CD8-positive, alpha-beta T cell (primary cell): ENCODE measurements at regions of chrX and their contacts with region 1.

Region 1: GRCh38 chrX:56600141-56600540 is 36.7 kb downstream of the UBQLN2 start:
- DNase-seq: no peak
- ATAC-seq: no peak
- H3K4me3 ChIP-seq: no peak overlapping the region
- H3K4me3 Mint-ChIP-seq: no peak overlapping the region
- H3K27ac ChIP-seq: no peak overlapping the region
- H3K27ac Mint-ChIP-seq: no peak overlapping the region
- H3K4me1 ChIP-seq: no peaks in the 10 kb centered on the region
- H3K4me1 Mint-ChIP-seq: peaks cover 3% of the 10 kb centered on the region
- H3K27me3 ChIP-seq: no peaks in the 10 kb centered on the region
- H3K27me3 Mint-ChIP-seq: no peaks in the 10 kb centered on the region
- CTCF ChIP-seq: no peak

Region 2: GRCh38 chrX:56550667-56551066 is 49.5 kb before region 1 on chrX:
- CTCF ChIA-PET with region 1: no interaction called
- POLR2A ChIA-PET with region 1: no interaction called
- intact Hi-C with region 1: loop called in 1 of 2 experiments (anchors 10 kb)
- DNase-seq: no peak
- ATAC-seq: no peak
- H3K4me3 ChIP-seq: no peak overlapping the region
- H3K4me3 Mint-ChIP-seq: no peak overlapping the region
- H3K27ac ChIP-seq: no peak overlapping the region
- H3K27ac Mint-ChIP-seq: no peak overlapping the region
- H3K4me1 ChIP-seq: no peaks in the 10 kb centered on the region
- H3K4me1 Mint-ChIP-seq: no peaks in the 10 kb centered on the region
- H3K27me3 ChIP-seq: no peaks in the 10 kb centered on the region
- H3K27me3 Mint-ChIP-seq: no peaks in the 10 kb centered on the region
- CTCF ChIP-seq: no peak

Region 3: GRCh38 chrX:56729152-56729850 is 129.2 kb after region 1 on chrX and contains the start of gene NBDY:
- CTCF ChIA-PET with region 1: no interaction called
- POLR2A ChIA-PET with region 1: no interaction called
- intact Hi-C with region 1: no loop called
- DNase-seq: peak; percentile 1 to 71 (median 33)
- ATAC-seq: peak; percentile 84
- H3K4me3 ChIP-seq: peak within 1 kb of the TSS; percentile 72 to 85
- H3K4me3 Mint-ChIP-seq: peak within 1 kb of the TSS; percentile 92
- H3K27ac ChIP-seq: peak within 1 kb of the TSS; percentile 85 to 88
- H3K27ac Mint-ChIP-seq: peak within 1 kb of the TSS; percentile 93
- H3K4me1 ChIP-seq: peaks cover 4% of the 10 kb centered on the region
- H3K4me1 Mint-ChIP-seq: peaks cover 37% of the 10 kb centered on the region
- H3K27me3 ChIP-seq: no peaks in the 10 kb centered on the region
- H3K27me3 Mint-ChIP-seq: no peaks in the 10 kb centered on the region
- CTCF ChIP-seq: no peak
- total RNA-seq, gene NBDY: 20.6 to 22.5 TPM